Right cardiac atrium (tissue), 5 donors: ENCODE measurements at regions of chr19 and their contacts with region 1.

Region 1: DNA sequence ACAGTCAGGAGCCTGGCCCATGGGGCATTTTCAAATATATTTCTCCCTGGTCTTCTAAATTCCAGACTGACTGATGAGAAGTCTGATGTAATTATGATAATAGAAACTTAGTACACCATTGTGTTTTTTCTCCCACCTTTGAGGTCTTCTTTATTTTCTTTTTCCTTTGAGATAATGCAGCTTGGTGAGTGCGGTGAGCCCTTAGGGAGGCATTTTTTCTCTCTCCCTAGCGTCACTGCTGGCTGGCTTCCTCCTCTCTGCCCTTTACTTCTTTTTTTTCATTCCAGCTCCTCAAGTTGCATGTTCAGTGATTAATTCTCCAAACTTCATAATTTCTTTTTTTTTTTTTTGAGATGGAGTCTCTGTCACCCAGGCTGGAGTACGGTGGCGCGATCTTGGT is 12.8 kb upstream of the CDC42EP5 start:
- DNase-seq: no peak
- ATAC-seq: no peak
- H3K4me3 ChIP-seq: no peak overlapping the region
- H3K27ac ChIP-seq: no peak overlapping the region
- H3K4me1 ChIP-seq: no peaks in the 10 kb centered on the region
- H3K27me3 ChIP-seq: no peaks in the 10 kb centered on the region

Region 2: GRCh38 chr19:54339646-54340358 is 146.0 kb before region 1 on chr19:
- intact Hi-C with region 1: no loop called
- DNase-seq: no peak
- ATAC-seq: no peak
- H3K4me3 ChIP-seq: no peak overlapping the region
- H3K27ac ChIP-seq: no peak overlapping the region
- H3K4me1 ChIP-seq: no peaks in the 10 kb centered on the region
- H3K27me3 ChIP-seq: no peaks in the 10 kb centered on the region

Region 3: DNA sequence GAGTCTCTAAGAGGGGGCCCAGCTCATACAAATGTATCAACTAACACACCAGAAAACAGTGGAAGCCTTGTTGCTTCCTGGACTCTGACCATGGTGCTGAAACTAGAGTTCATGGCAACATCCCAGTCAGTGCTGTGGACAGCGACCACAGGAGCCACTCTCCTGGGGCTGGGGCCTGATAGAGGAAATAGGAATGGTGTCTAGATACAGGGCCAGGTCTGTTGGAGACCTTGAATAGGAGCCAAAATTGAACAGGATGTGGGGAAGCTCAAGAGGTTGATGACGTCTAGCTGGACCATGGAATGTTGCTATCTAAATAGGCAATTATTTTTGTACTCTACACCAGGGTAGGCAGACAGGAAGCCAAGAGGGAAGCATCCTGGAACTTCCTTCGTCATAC is 198.7 kb after region 1 on chr19:
- intact Hi-C with region 1: loop called in 1 of 4 experiments (anchors 5 kb)
- DNase-seq: no peak
- ATAC-seq: no peak
- H3K4me3 ChIP-seq: no peak overlapping the region
- H3K27ac ChIP-seq: no peak overlapping the region
- H3K4me1 ChIP-seq: no peaks in the 10 kb centered on the region
- H3K27me3 ChIP-seq: no peaks in the 10 kb centered on the region